ENCODE measurements at regions of chr3 and their contacts with region 1.

Region 1: GRCh38 chr3:50245831-50246516 is 10.0 kb downstream of the GNAI2 start:
- DNase-seq: peak; percentile 96
- ATAC-seq: peak; percentile 83
- H3K4me3 Mint-ChIP-seq: peak overlapping the region; percentile 76
- H3K27ac Mint-ChIP-seq: peak overlapping the region; percentile 91
- H3K4me1 Mint-ChIP-seq: peaks cover 74% of the 10 kb centered on the region
- H3K27me3 Mint-ChIP-seq: no peaks in the 10 kb centered on the region

Region 2: GRCh38 chr3:50192689-50193141 is 53.3 kb before region 1 on chr3:
- CTCF ChIA-PET with region 1: interaction called, 42 read pairs
- POLR2A ChIA-PET with region 1: interaction called, 3 read pairs
- DNase-seq: peak; percentile 87
- ATAC-seq: peak; percentile 45
- H3K4me3 Mint-ChIP-seq: no peak overlapping the region
- H3K27ac Mint-ChIP-seq: no peak overlapping the region
- H3K4me1 Mint-ChIP-seq: peaks cover 16% of the 10 kb centered on the region
- H3K27me3 Mint-ChIP-seq: peaks cover 16% of the 10 kb centered on the region

Region 3: DNA sequence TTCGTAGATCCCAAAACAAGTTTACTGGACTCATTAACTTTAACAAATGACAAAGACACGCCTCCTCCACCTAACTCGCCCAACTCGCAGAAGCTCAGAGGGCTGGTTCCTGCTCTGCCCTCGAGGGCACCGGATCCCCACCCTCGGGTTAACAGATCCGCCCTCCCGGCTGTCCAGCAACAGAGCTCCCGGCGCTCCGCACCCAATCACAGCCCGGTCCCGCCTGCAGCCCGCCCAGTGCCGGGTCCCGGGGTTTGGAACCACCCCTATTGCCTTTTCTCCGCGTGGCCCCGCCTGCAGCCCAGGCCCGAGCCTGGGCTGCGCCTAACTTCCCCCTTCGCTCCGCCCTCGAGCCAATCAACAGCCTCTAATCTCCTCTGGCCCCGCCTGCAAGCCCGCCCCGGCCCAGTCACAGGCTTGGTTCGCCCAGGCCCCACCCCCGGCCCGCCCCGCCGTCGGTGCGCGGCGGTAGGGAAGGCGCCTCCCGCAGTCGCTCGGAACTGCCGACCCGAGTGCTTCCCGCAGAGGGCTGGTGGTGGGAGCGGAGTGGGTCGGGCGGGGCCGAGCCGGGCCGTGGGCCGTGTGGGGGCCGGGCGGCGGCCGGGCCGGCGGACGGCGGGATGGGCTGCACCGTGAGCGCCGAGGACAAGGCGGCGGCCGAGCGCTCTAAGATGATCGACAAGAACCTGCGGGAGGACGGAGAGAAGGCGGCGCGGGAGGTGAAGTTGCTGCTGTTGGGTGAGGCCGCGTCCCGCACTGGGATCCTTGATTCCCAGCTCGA is 10.1 kb before region 1 on chr3 and contains the start of gene GNAI2:
- CTCF ChIA-PET with region 1: interaction called, 180 read pairs
- POLR2A ChIA-PET with region 1: interaction called, 24 read pairs
- DNase-seq: peak; percentile 99
- ATAC-seq: peak; percentile 94
- H3K4me3 Mint-ChIP-seq: peak within 1 kb of the TSS; percentile 99
- H3K27ac Mint-ChIP-seq: peak within 1 kb of the TSS; percentile 93
- H3K4me1 Mint-ChIP-seq: peaks cover 42% of the 10 kb centered on the region
- H3K27me3 Mint-ChIP-seq: no peaks in the 10 kb centered on the region
- total RNA-seq, gene GNAI2: 515 to 531 TPM

Region 4: GRCh38 chr3:50267280-50267913 is 21.4 kb after region 1 on chr3:
- CTCF ChIA-PET with region 1: interaction called, 14 read pairs
- POLR2A ChIA-PET with region 1: interaction called, 4 read pairs
- DNase-seq: no peak
- ATAC-seq: no peak
- H3K4me3 Mint-ChIP-seq: no peak overlapping the region
- H3K27ac Mint-ChIP-seq: no peak overlapping the region
- H3K4me1 Mint-ChIP-seq: peaks cover 6% of the 10 kb centered on the region
- H3K27me3 Mint-ChIP-seq: peaks cover 18% of the 10 kb centered on the region

Region 5: DNA sequence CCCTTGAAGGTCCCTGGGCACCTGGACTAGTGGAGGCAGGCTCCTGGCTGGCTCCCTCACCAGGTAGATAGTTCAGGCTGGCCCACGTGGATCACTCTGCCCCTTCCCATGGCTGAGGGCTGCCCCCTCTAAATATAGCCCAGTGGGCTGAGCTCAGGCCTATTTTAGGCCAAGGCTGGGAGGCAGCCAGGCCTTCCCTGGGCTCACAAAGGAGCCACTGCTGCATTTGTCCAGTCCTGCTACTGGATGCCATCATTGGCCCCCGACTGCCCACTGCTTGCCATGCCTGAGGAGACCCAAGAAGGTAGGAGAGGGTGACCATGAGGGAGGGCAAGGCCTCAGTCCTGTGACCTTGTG is 32.9 kb after region 1 on chr3 and contains the start of gene LSMEM2:
- CTCF ChIA-PET with region 1: interaction called, 17 read pairs
- POLR2A ChIA-PET with region 1: interaction called, 5 read pairs
- DNase-seq: no peak
- ATAC-seq: no peak
- H3K4me3 Mint-ChIP-seq: no peak within 1 kb of the TSS
- H3K27ac Mint-ChIP-seq: no peak within 1 kb of the TSS
- H3K4me1 Mint-ChIP-seq: peaks cover 20% of the 10 kb centered on the region
- H3K27me3 Mint-ChIP-seq: peaks cover 38% of the 10 kb centered on the region
- total RNA-seq, gene LSMEM2: not detected

Region 6: DNA sequence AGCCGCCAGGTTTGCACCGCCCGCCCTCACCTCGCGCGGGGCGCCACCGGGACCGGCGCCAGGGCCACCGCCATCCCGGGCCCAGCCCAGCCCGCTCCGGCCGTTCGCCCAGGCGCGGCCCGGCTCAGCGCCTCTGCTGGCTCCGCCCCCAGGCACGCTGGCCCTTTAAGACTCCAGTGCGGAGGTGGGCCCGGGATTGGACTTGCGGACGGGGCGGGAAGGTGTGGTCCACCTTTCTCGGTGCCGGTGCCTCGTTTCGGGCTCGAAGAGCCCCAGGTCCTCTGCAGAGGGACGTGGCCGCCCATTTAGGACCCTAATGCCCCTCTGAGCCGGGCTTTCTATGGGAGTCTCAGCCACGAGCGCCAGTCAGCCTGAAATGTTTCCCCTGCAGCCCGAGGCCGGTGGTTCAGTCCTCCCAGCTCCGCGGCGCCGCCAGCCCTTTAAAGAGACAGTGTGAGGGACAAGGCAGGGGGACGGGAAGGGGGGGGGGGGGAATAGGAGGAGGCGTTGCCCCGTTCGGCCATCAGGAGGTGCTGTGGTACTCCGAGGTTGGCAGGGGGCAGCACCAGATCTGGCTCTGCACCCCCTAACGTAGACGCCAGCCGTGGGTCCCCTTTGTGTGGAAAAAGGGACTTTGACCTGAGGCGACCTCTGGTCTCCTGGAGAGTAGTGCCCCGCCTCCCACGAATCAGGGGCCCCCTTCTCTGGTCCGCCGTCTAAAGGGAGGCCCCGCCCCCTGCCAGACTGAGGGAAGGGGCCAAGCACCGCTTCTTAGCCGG is 75.6 kb after region 1 on chr3:
- CTCF ChIA-PET with region 1: interaction called, 17 read pairs
- POLR2A ChIA-PET with region 1: no interaction called
- DNase-seq: peak; percentile 88
- ATAC-seq: peak; percentile 82
- H3K4me3 Mint-ChIP-seq: peak overlapping the region; percentile 89
- H3K27ac Mint-ChIP-seq: peak overlapping the region; percentile 95
- H3K4me1 Mint-ChIP-seq: peaks cover 43% of the 10 kb centered on the region
- H3K27me3 Mint-ChIP-seq: no peaks in the 10 kb centered on the region

Region 7: GRCh38 chr3:50337191-50337841 is 91.3 kb after region 1 on chr3:
- CTCF ChIA-PET with region 1: interaction called, 12 read pairs
- POLR2A ChIA-PET with region 1: interaction called, 4 read pairs
- DNase-seq: peak; percentile 99
- ATAC-seq: peak; percentile 75
- H3K4me3 Mint-ChIP-seq: peak overlapping the region; percentile 92
- H3K27ac Mint-ChIP-seq: peak overlapping the region; percentile 96
- H3K4me1 Mint-ChIP-seq: peaks cover 56% of the 10 kb centered on the region
- H3K27me3 Mint-ChIP-seq: no peaks in the 10 kb centered on the region

Region 8: GRCh38 chr3:50358911-50359759 is 113.2 kb after region 1 on chr3 and contains the start of gene TMEM115:
- CTCF ChIA-PET with region 1: no interaction called
- POLR2A ChIA-PET with region 1: no interaction called
- DNase-seq: peak; percentile 98
- ATAC-seq: peak; percentile 99
- H3K4me3 Mint-ChIP-seq: peak within 1 kb of the TSS; percentile 96
- H3K27ac Mint-ChIP-seq: peak within 1 kb of the TSS; percentile 93
- H3K4me1 Mint-ChIP-seq: peaks cover 50% of the 10 kb centered on the region
- H3K27me3 Mint-ChIP-seq: peaks cover 5% of the 10 kb centered on the region
- total RNA-seq, gene TMEM115: 18.0 to 18.9 TPM

Measured in activated CD8-positive, alpha-beta T cell treated with anti-CD3 and anti-CD28 coated beads, Interleukin-2, amount 10 ng/mL, durations not matched to agents 7 days and 5 days (primary cell).